ENCODE measurements at regions of chr2 and their contacts with region 1.

Region 1: DNA sequence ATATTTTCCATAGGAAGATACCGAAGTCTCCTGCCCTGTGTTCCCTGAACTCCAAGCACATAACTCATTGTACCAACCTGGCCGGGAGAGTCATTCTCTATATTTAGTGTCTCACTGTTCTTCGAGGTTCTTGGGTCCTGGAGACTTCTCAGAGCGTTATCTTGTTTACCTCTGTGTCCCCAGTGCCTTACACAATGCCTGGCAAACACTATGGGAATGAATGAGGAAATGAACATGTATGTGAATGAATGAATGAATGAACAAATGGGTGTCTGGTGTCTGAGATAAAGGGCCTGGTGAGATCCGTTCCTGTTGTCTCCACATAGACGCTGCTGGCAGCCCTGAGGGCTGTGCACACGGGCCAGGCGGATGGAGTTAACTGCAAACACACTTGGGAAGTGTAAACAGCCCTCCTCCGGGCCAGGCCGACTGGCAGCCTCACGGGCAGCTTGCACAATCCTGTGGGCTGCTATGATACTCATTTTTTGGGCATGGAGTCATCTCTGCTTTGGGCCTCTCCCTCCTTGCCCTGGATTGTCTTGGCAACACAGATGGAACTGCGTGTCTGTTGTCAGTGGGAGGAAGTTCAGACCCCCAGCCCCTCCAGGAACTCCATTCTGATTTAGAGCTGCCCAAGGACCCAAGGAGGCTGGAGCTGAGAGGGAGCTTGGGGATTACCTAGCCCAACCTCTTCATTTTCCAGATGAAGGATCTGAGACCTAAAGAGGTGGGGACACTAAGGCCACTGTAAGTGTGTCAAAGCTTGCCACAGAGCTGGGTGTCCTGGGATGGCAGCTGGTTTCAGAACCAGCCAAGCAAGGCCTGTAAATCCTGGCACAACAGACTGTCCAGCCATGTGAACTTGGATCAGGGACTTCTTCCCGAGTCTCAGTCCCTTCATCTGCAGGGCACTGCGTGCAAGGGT is 124.4 kb downstream of the INHBB start:
- DNase-seq: peak; percentile 84 to 97
- H3K4me3 ChIP-seq: no peak overlapping the region
- H3K27ac ChIP-seq: peak overlapping the region; percentile 51
- H3K4me1 ChIP-seq: peaks cover 44% of the 10 kb centered on the region
- H3K27me3 ChIP-seq: no peaks in the 10 kb centered on the region
- CTCF ChIP-seq: no peak

Region 2: DNA sequence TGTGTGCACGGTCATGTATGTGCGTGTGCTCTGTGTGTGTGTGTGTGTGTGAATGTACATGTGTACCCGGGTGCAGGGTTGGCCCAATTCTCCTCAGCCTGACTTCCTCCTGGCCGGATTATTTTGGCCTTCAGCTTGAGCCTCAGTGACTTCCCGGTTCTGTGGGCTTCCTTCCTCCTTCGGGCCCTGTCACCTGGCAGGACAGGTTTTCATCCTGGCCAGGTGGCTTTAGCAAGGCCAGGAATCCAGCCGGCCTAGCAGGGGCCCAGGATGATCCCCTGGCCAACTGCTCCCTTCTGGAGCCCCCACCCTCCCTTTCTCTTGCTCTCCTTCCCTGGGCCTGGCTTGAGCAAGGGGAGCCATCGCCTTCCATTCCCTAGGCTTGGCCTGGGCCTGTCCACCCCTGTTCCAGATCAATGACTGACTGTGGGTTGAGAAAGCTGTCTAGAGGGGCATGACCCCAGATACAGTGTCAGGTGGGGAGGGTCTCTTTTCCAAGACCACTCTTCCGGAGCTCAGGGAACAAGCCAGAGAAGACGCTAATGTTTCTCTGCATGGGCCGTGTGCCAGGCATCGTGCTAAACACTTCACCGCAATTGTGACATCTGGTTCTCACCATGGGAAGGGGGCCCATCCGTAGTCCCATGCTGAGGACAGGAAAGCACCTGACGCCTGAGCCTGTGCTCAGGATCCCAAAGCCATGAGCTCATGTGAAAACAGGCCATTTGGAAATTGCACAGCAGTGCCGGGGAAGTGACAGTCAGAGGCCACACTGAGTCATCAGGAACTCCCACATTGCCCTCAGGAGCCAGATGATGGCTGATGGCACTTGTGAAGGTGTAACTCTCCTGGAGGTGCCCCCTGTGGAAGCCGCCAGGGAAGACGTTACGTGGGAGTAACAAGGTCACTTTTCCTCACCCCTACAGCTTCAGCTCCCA is 16.4 kb after region 1 on chr2:
- CTCF ChIA-PET with region 1: no interaction called
- POLR2A ChIA-PET with region 1: no interaction called
- intact Hi-C with region 1: loop called (anchors 2 kb)
- DNase-seq: peak; percentile 71 to 96
- H3K4me3 ChIP-seq: no peak overlapping the region
- H3K27ac ChIP-seq: peak overlapping the region; percentile 77
- H3K4me1 ChIP-seq: peaks cover 19% of the 10 kb centered on the region
- H3K27me3 ChIP-seq: no peaks in the 10 kb centered on the region
- CTCF ChIP-seq: no peak

Region 3: DNA sequence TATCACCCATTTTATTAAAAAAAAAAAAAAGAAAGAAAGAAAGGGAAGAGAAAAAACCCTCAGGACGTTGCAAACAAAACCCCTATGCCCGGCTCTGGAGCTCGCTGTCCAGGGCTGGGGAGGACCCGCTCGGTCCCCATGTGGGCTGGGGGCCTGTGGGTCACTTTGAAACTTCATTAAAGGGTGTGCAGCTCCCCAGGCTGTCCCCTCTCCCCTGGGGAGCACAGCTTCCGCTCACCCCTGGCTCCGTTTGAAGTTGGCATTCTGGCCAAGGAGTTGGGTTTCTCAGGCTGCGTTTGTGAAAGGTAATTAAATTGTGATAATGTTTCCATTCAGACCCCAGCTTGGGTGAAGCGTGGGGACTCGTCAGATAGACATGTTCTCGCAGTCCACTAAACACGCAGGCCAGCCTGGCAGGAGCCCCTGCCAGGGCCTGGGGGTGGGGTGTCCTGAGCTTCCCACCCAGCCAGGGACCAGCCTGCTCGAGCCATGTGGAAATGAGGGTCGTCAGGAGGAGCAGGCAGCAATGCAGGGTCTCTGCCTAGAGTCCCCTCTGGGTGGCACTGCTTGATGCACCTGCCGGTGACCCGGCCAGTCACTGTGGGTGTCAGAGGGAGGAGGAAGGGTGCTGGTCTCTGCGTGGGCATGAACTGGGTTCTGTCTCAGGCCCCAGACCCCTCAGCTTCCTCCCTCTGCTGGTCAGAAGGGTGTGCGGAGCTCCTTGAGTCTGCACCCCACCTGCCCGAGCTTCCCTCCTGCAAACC is 41.8 kb after region 1 on chr2:
- CTCF ChIA-PET with region 1: no interaction called
- POLR2A ChIA-PET with region 1: no interaction called
- intact Hi-C with region 1: no loop called
- DNase-seq: no peak
- H3K4me3 ChIP-seq: no peak overlapping the region
- H3K27ac ChIP-seq: no peak overlapping the region
- H3K4me1 ChIP-seq: peaks cover 6% of the 10 kb centered on the region; the same call in 1 of the 2 replicates
- H3K27me3 ChIP-seq: no peaks in the 10 kb centered on the region
- CTCF ChIP-seq: no peak

Region 4: GRCh38 chr2:120712180-120712681 is 241.9 kb after region 1 on chr2:
- CTCF ChIA-PET with region 1: no interaction called
- POLR2A ChIA-PET with region 1: no interaction called
- intact Hi-C with region 1: no loop called
- DNase-seq: peak in 1 of 2 experiments; percentile 31
- H3K4me3 ChIP-seq: no peak overlapping the region
- H3K27ac ChIP-seq: no peak overlapping the region
- H3K4me1 ChIP-seq: no peaks in the 10 kb centered on the region
- H3K27me3 ChIP-seq: peaks cover 39% of the 10 kb centered on the region
- CTCF ChIP-seq: no peak

Measured in PC-9 (cell line).